BJ (cell line): ENCODE measurements at regions of chr9 and their contacts with region 1.

Region 1: DNA sequence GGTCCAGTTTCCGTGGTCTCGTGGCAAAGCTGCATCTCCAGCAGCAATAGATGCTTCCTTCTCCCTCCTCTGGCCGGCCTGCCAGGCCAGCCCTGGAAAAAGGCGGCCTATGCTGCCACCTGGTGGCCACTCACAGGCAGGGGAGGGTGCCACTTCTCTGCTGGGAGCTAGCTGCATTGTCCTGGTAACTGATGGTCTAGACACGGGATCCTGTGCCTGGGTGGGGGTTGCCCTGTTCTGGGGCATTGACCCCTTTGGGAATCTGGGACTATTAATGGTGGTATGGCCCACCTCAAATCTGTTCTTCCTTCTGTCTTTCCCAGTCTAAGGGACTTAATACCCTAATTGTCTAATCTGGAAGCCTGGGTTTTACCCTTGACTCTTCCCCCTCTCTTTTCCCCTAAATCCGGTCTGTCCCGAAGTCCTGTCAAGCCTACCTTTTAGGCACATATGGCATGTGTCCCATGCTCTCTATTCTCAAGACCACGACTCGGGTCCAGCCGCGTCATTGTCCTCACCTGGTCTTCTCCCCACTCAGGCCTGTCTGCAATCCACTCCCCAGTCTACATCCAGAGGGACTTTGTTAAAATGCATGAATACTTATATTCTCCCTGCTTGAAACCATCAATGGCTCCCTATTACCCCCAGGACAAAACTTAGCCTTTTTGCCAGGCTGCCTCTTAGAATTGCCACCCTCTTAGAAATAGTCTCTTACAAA is 20.0 kb upstream of the PTGS1 start:
- DNase-seq: no peak
- H3K4me3 ChIP-seq: no peak overlapping the region
- H3K27me3 ChIP-seq: no peaks in the 10 kb centered on the region
- CTCF ChIP-seq: peak; percentile 94

Region 2: GRCh38 chr9:122099271-122099869 is 251.4 kb before region 1 on chr9:
- CTCF ChIA-PET with region 1: interaction called, 119 read pairs
- POLR2A ChIA-PET with region 1: no interaction called
- DNase-seq: no peak
- H3K4me3 ChIP-seq: no peak overlapping the region
- H3K27me3 ChIP-seq: no peaks in the 10 kb centered on the region; the same call in 1 of the 2 replicates
- CTCF ChIP-seq: peak; percentile 83

Region 3: DNA sequence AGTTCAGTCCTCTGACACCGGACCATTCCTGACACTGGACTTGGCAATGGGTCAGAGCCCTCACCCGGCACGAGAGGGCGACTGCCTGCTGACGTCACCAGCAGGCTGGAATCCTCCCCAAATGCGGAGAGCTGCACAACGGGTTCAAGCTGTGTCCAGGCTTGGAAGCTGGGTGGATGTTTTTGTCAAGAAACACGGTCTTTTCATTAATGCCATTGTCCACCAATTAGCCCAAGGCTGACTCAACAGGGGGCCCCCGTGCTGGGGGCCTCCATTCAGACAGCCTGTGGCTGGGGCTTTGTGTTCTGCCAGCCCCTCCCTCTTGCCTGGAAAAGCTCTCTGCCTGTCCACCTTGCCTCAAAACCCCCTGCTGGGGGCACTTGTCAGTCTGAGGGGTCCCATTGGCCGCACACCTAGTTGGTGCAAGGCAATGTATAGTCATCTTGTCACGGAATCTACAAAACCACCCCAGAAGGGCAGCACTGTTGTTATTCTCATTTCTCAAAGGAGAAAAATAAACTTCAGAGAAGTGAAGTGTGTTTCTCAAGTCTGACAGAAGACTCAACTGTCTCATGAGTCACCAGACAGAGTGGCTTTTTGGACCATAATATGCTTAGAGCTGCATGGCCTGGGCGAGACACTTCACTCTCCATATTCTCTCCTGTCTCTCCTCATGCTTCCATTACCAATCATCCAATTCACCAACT is 215.8 kb before region 1 on chr9:
- CTCF ChIA-PET with region 1: interaction called, 422 read pairs
- POLR2A ChIA-PET with region 1: no interaction called
- DNase-seq: no peak
- H3K4me3 ChIP-seq: no peak overlapping the region
- H3K27me3 ChIP-seq: no peaks in the 10 kb centered on the region
- CTCF ChIP-seq: no peak

Region 4: DNA sequence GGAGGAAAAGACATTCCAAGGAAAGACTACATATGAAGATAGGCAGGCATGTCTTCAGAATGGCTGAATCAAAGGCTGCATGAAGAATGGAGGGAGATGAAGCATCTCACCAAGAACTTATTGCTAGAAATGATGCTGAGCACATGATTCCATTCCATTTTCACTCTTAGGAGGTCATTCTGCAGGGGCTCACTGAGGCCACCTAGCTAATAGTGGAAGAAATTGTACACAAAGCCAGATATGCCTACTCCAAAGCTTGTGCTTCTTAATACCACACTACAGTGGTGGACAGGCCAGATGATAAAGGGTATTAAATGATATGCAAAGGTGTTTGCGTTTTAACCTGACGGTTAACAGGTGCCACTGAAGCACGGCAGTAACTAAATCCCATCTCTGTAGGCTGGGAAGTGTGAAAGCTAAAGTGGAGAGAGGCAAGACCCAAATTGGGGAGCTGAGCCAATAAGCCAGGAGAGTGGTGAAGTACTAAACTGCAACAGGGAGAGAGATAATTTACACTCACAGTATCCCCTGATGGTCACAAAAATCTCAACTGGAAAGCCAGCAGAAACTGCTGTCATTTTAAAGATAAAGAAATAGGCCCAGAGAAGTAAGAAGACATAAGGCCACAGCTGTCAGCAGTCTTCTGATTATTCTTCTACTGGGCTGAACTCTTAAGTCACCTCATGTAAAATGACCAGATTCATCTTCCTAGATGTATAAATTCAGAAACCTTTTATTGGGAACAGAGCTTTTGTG is 205.8 kb before region 1 on chr9:
- CTCF ChIA-PET with region 1: interaction called, 11 read pairs
- POLR2A ChIA-PET with region 1: no interaction called
- DNase-seq: no peak
- H3K4me3 ChIP-seq: no peak overlapping the region
- H3K27me3 ChIP-seq: no peaks in the 10 kb centered on the region
- CTCF ChIP-seq: peak; percentile 49

Region 5: GRCh38 chr9:122338994-122339393 is 11.8 kb before region 1 on chr9:
- CTCF ChIA-PET with region 1: interaction called, 22 read pairs
- POLR2A ChIA-PET with region 1: no interaction called
- DNase-seq: no peak
- H3K4me3 ChIP-seq: no peak overlapping the region
- H3K27me3 ChIP-seq: no peaks in the 10 kb centered on the region; the same call in 1 of the 2 replicates
- CTCF ChIP-seq: no peak

Region 6: GRCh38 chr9:122453677-122454135 is 102.9 kb after region 1 on chr9:
- CTCF ChIA-PET with region 1: interaction called, 14 read pairs
- POLR2A ChIA-PET with region 1: no interaction called
- DNase-seq: no peak
- H3K4me3 ChIP-seq: no peak overlapping the region
- H3K27me3 ChIP-seq: no peaks in the 10 kb centered on the region
- CTCF ChIP-seq: no peak